Caco-2 (cell line): ENCODE measurements at regions of chr4 and their contacts with region 1.

Region 1: DNA sequence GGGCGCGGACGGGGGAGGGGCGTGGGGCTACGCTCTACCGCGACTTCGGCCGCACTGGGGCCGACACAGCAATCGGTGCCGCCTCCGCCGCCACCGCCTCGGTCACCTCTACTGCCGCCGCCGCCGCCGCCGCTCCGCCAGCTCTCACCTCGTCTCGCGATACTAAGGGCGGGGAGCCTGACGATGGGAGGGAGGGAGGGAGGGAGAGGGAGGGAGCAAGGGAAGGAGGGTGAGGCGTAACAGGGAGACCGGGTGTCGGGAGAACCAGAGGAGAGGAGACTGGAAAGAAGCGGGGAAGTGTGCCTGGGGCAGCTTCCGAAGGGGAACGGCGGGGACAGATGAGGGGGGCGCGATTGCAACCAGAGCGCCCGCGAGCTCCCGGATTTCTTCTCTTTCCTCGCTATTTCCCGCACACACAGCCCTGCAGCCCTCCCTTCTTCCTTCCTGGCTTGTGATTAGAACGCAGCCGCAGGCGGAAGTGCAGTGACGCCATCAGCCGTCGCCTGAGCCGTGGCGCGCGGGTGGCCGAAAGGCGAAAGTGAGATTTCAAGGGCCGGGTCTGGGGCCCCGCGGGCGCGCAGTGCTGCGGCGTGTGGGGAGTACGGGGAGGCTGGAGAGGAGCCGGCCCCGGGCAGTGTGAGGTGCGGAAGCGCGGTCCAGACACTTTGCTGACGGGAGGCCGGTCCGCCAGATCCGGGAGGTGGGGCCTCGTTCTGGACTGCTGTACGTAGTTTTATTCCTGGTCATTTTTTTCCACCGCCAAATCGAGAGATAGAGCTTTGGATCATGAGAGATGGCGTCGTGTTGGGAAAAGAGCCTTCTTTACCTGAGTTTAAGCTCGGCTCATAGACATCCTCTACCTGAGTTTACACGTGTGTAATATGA is at the start of gene ANKRD17:
- DNase-seq: peak; percentile 93
- H3K4me3 ChIP-seq: peak within 1 kb of the TSS; percentile 97
- H3K4me3 Mint-ChIP-seq: peak within 1 kb of the TSS; percentile 85
- H3K27ac Mint-ChIP-seq: peak within 1 kb of the TSS; percentile 100
- H3K4me1 ChIP-seq: peaks cover 14% of the 10 kb centered on the region; the same call in 1 of the 2 replicates
- H3K4me1 Mint-ChIP-seq: peaks cover 14% of the 10 kb centered on the region
- H3K27me3 ChIP-seq: no peaks in the 10 kb centered on the region
- H3K27me3 Mint-ChIP-seq: no peaks in the 10 kb centered on the region
- CTCF ChIP-seq: peak in 1 of 2 experiments; percentile 2
- total RNA-seq, gene ANKRD17: 66.8 and 73.0 TPM in 2 replicates

Region 2: DNA sequence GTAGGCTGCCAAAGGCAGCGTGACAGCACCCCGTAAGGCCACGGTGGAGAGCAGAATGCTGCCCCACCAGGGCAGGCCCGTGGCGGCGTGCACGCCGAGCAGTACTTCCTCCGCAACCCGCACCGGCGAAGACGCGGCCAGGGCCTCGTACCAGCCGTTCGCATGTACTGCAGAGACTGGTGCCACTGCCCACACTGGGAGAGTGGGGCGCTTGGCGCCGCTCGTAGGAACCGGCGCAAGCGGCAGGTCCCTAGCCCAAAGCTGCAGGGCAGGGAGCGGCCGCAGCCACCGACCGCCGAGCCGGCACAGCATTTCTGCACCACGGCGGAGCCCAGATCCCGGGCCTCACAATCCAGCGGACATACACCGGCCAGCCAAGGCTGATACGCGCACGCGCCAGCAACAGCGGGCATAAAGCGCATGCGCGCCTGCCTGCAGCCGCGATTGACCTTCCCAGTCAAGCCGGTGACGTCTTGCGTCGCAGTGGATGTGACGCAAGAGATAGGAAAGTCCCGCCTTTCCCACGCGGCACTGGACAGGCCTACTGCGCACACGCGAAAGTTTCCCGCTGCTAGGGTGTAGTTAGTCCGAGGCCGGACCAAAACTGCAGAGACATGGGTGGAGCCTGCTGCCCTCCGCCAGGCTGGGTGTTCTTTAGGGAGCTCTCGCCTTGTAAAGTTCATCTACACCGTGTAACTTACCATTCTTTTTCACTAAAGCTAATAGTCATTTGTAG is 189.4 kb before region 1 on chr4 and contains the start of gene COX18:
- CTCF ChIA-PET with region 1: no interaction called
- POLR2A ChIA-PET with region 1: no interaction called
- intact Hi-C with region 1: loop called (anchors 1 kb)
- DNase-seq: peak; percentile 96 to 97
- H3K4me3 ChIP-seq: peak within 1 kb of the TSS; percentile 52
- H3K4me3 Mint-ChIP-seq: peak within 1 kb of the TSS; percentile 94
- H3K27ac Mint-ChIP-seq: peak within 1 kb of the TSS; percentile 98
- H3K4me1 ChIP-seq: no peaks in the 10 kb centered on the region
- H3K4me1 Mint-ChIP-seq: no peaks in the 10 kb centered on the region
- H3K27me3 ChIP-seq: no peaks in the 10 kb centered on the region
- H3K27me3 Mint-ChIP-seq: no peaks in the 10 kb centered on the region
- CTCF ChIP-seq: no peak
- total RNA-seq, gene COX18: 11.6 and 12.2 TPM in 2 replicates

Region 3: GRCh38 chr4:73103799-73104503 is 155.0 kb before region 1 on chr4:
- CTCF ChIA-PET with region 1: interaction called, 5 read pairs
- POLR2A ChIA-PET with region 1: interaction called, 15 read pairs
- intact Hi-C with region 1: no loop called
- DNase-seq: peak; percentile 58 to 60
- H3K4me3 ChIP-seq: peak overlapping the region; percentile 29
- H3K4me3 Mint-ChIP-seq: peak overlapping the region; percentile 69
- H3K27ac Mint-ChIP-seq: peak overlapping the region; percentile 85
- H3K4me1 ChIP-seq: peaks cover 20% of the 10 kb centered on the region
- H3K4me1 Mint-ChIP-seq: peaks cover 24% of the 10 kb centered on the region
- H3K27me3 ChIP-seq: no peaks in the 10 kb centered on the region
- H3K27me3 Mint-ChIP-seq: no peaks in the 10 kb centered on the region
- CTCF ChIP-seq: no peak

Region 4: GRCh38 chr4:73127839-73128453 is 131.0 kb before region 1 on chr4:
- CTCF ChIA-PET with region 1: interaction called, 6 read pairs
- POLR2A ChIA-PET with region 1: no interaction called
- intact Hi-C with region 1: loop called (anchors 1 kb)
- DNase-seq: peak in 1 of 2 experiments; percentile 10
- H3K4me3 ChIP-seq: no peak overlapping the region
- H3K4me3 Mint-ChIP-seq: no peak overlapping the region
- H3K27ac Mint-ChIP-seq: no peak overlapping the region
- H3K4me1 ChIP-seq: no peaks in the 10 kb centered on the region
- H3K4me1 Mint-ChIP-seq: no peaks in the 10 kb centered on the region
- H3K27me3 ChIP-seq: no peaks in the 10 kb centered on the region
- H3K27me3 Mint-ChIP-seq: no peaks in the 10 kb centered on the region
- CTCF ChIP-seq: peak in 1 of 2 experiments; percentile 31

Region 5: GRCh38 chr4:73222466-73223257 is 36.3 kb before region 1 on chr4:
- CTCF ChIA-PET with region 1: interaction called, 3 read pairs
- POLR2A ChIA-PET with region 1: no interaction called
- intact Hi-C with region 1: loop called (anchors 2 kb)
- DNase-seq: peak; percentile 67 to 74
- H3K4me3 ChIP-seq: peak overlapping the region; percentile 37
- H3K4me3 Mint-ChIP-seq: no peak overlapping the region
- H3K27ac Mint-ChIP-seq: no peak overlapping the region
- H3K4me1 ChIP-seq: peaks cover 10% of the 10 kb centered on the region; the same call in 1 of the 2 replicates
- H3K4me1 Mint-ChIP-seq: peaks cover 7% of the 10 kb centered on the region
- H3K27me3 ChIP-seq: no peaks in the 10 kb centered on the region
- H3K27me3 Mint-ChIP-seq: no peaks in the 10 kb centered on the region
- CTCF ChIP-seq: no peak

Region 6: GRCh38 chr4:73275318-73275654 is 16.4 kb after region 1 on chr4:
- CTCF ChIA-PET with region 1: interaction called, 3 read pairs
- POLR2A ChIA-PET with region 1: interaction called, 12 read pairs
- intact Hi-C with region 1: no loop called
- DNase-seq: no peak
- H3K4me3 ChIP-seq: no peak overlapping the region
- H3K4me3 Mint-ChIP-seq: no peak overlapping the region
- H3K27ac Mint-ChIP-seq: no peak overlapping the region
- H3K4me1 ChIP-seq: peaks cover 4% of the 10 kb centered on the region; the same call in 1 of the 2 replicates
- H3K4me1 Mint-ChIP-seq: peaks cover 21% of the 10 kb centered on the region
- H3K27me3 ChIP-seq: no peaks in the 10 kb centered on the region
- H3K27me3 Mint-ChIP-seq: no peaks in the 10 kb centered on the region
- CTCF ChIP-seq: no peak

Region 7: DNA sequence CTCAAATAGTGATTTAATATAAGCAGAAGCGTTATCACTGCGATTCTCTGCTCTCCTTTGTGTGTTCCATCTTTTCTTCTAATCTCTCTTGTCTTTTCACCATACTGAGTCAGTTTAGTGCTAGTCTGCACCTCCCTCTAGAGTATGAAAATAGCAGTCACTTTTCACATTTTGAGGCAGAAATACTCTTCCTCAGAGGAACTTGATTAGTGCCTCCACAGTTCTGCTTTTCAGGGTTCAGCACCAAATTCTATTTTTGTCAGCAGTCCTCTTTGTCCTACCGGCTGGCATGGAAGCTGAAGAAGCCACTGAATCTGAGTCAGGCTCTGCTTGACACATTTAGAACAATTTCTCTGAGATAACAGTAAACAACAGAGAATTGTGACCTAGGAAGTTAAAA is 49.4 kb after region 1 on chr4:
- CTCF ChIA-PET with region 1: no interaction called
- POLR2A ChIA-PET with region 1: no interaction called
- intact Hi-C with region 1: loop called (anchors 1 kb)
- DNase-seq: no peak
- H3K4me3 ChIP-seq: no peak overlapping the region
- H3K4me3 Mint-ChIP-seq: no peak overlapping the region
- H3K27ac Mint-ChIP-seq: no peak overlapping the region
- H3K4me1 ChIP-seq: no peaks in the 10 kb centered on the region
- H3K4me1 Mint-ChIP-seq: peaks cover 11% of the 10 kb centered on the region
- H3K27me3 ChIP-seq: no peaks in the 10 kb centered on the region
- H3K27me3 Mint-ChIP-seq: no peaks in the 10 kb centered on the region
- CTCF ChIP-seq: peak; percentile 23 to 40

Region 8: DNA sequence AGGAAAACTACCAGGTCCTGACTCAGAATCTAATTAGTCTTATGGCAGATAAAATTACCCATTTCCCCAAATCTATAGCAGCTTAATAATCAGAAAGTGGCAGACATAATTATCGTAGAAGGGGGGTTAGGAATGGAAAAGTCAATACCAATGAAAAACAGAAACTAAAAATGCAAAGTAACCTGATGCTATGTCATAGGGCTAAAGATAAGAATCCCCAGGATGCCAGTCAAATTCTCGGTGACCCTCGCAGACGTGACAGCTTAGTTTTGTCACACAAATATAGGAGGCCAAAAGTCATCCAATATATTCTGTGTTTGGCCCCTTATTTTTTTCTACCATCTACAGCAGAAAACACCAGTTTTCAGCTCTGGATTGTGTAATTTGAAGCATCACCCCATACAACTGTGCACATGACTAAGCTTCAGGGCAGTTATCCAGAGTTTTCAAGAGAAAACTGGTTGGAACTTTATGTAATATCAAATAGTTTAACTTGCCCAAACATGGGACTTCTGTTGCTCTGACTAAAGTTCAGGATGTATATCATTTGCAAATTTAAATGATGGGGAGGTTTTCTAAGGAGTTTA is 330.4 kb after region 1 on chr4:
- CTCF ChIA-PET with region 1: no interaction called
- POLR2A ChIA-PET with region 1: no interaction called
- intact Hi-C with region 1: no loop called
- DNase-seq: no peak
- H3K4me3 ChIP-seq: no peak overlapping the region
- H3K4me3 Mint-ChIP-seq: no peak overlapping the region
- H3K27ac Mint-ChIP-seq: no peak overlapping the region
- H3K4me1 ChIP-seq: no peaks in the 10 kb centered on the region
- H3K4me1 Mint-ChIP-seq: no peaks in the 10 kb centered on the region
- H3K27me3 ChIP-seq: no peaks in the 10 kb centered on the region
- H3K27me3 Mint-ChIP-seq: no peaks in the 10 kb centered on the region
- CTCF ChIP-seq: no peak